Activated naive CD4-positive, alpha-beta T cell treated with anti-CD3 and anti-CD28 coated beads, Interleukin-2, amount 10 ng/mL, durations not matched to agents 7 days and 5 days (primary cell): ENCODE measurements at regions of chr1 and their contacts with region 1.

Region 1: DNA sequence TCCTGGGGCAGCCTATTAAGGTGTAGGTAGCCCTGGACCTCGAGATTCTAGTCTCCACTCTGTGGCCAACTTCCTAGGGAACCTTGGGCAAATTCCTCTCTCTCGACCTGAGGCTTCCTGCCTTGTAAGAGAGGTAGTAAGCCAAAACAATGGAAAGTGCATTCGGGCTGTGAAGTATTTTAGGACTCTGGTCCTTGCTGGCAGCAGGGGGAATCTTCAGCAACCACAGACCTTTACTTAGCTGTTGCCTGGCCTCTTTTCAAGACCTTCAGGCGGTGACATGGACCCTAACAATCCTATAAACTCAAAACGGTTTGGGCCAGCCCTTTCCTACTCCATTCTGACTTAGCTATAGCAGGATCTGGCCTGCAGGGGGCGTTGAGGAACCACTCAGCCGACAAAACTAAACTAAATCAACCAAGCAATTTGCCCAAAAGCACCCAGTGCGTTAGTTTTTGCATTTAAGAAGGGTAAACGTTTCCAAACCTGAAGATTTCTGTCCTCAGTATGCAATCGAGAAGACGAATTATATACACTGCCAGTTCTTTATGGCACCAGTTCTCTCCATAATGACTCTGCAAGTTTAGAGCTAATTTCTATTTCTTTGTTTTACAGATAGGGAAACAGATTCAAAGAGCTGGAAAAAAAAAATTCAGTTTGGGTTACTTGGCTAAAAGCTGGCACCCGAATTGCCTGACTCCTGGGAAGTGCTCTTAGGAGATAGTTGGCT is 10.9 kb upstream of the SESN2 start:
- DNase-seq: peak; percentile 90
- H3K4me3 Mint-ChIP-seq: peak overlapping the region; percentile 91
- H3K27ac Mint-ChIP-seq: peak overlapping the region; percentile 98
- H3K4me1 Mint-ChIP-seq: peaks cover 53% of the 10 kb centered on the region
- H3K27me3 Mint-ChIP-seq: no peaks in the 10 kb centered on the region

Region 2: DNA sequence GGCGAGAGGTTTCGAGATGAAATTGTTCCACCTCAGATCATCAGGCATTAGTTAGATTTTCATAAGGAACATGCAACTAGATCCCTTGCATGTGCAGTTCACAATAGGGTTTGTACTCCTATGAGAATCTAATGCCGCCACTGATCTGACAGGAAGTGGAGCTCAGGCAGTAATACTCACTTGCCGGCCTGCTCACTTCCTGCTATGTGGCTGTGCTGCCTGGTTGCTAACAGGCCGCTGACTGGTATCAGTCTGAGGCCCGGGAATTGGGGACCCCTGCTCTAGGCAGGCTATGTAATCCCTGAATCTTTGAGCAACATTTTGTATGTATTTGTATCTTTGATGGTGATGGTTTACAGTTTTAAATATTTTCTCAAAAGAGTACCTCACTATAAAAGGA is 256.2 kb before region 1 on chr1:
- CTCF ChIA-PET with region 1: no interaction called
- DNase-seq: peak; percentile 68
- H3K4me3 Mint-ChIP-seq: no peak overlapping the region
- H3K27ac Mint-ChIP-seq: peak overlapping the region; percentile 82
- H3K4me1 Mint-ChIP-seq: peaks cover 43% of the 10 kb centered on the region
- H3K27me3 Mint-ChIP-seq: no peaks in the 10 kb centered on the region

Region 3: DNA sequence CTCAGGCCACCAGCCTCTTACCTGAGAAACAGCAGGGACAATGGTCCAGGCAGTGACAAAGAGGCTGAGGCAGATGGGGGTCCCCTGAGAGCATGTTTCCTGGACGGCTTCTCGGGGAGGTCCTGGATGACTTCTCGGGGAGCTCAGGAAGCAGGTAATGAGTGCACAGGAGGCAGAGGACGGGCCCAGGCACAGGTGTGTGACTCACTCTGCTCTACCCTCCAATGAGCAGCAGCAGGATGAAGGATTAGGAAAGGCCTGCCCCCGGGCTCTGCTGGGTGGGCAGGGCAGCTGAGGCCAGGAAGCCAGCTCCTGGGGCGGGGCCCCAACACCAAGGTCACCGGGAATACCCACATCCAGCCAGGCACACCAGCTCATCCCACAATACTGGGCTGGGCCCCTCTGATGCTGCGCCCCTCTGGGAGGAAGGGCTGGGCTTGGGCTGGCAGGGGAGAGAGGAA is 54.7 kb before region 1 on chr1:
- CTCF ChIA-PET with region 1: no interaction called
- DNase-seq: no peak
- H3K4me3 Mint-ChIP-seq: no peak overlapping the region
- H3K27ac Mint-ChIP-seq: no peak overlapping the region
- H3K4me1 Mint-ChIP-seq: peaks cover 23% of the 10 kb centered on the region
- H3K27me3 Mint-ChIP-seq: peaks cover 9% of the 10 kb centered on the region

Region 4: DNA sequence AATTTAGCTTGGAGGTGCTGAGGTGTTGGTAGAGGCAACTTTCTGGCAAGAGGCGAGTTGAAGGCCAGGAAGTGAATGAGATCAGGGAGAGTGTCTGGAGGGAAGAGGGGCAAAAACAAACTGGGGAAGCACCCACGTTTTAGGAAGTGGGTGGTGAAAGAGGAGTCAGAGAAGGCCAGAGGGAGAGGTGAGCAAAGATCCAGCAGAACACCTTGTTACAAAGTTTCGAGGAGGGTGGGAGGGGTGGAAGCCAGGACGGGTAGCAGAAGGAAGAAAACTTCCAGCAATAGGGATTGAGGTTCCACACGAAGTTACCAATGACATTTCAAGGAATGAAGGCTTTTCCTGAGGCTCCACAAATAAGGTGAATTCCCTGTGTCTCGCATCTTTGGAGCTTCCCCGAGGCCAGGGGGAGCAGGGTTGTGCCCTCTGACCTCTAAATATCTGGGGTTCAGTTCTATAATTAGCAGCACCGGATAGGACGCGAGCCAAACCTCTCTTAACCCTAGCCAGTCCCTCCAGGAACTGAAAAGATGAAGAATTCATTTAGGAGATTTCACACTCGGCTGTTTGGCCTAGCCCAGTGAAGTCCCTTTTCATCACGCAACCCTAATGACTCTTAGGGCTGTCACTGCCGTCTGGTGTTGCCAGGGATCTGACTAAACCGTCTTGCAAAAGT is 10.3 kb after region 1 on chr1:
- CTCF ChIA-PET with region 1: interaction called, 20 read pairs
- DNase-seq: no peak
- H3K4me3 Mint-ChIP-seq: peak overlapping the region; percentile 74
- H3K27ac Mint-ChIP-seq: peak overlapping the region; percentile 83
- H3K4me1 Mint-ChIP-seq: peaks cover 56% of the 10 kb centered on the region
- H3K27me3 Mint-ChIP-seq: no peaks in the 10 kb centered on the region

Region 5: GRCh38 chr1:28329395-28330153 is 81.1 kb after region 1 on chr1:
- CTCF ChIA-PET with region 1: interaction called, 11 read pairs
- DNase-seq: no peak
- H3K4me3 Mint-ChIP-seq: peak overlapping the region; percentile 96
- H3K27ac Mint-ChIP-seq: peak overlapping the region; percentile 96
- H3K4me1 Mint-ChIP-seq: peaks cover 36% of the 10 kb centered on the region
- H3K27me3 Mint-ChIP-seq: peaks cover 5% of the 10 kb centered on the region

Region 6: DNA sequence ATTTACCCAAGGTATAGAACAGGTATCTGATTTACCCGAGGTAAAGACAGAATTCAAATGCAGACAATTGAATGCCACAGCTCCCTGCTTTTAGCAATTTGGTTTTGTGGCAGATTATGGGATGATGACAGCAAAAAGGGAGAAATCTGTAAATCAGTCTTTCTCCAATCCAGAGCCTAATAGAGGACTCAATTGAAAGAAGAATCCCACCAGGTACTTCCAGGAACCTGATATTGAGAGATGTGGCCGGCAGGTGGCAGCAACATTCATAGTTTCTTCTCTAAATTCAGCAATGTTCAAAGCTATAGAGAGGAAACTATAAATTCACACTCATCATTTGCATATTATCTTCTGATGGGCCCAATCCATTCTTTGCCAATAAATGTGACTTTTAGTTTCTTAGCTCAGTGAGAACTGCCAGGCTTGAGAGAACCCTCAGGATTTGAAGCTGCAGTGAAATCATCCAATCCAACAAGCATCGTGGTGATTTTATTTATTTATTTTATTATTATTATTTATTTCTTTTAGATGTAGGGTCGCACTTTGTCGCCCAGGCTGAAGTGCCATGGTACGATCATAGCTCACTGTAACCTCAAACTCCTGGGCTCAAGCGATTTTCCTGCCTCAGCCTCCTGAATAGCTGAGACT is 111.3 kb after region 1 on chr1:
- CTCF ChIA-PET with region 1: interaction called, 31 read pairs
- DNase-seq: peak; percentile 86
- H3K4me3 Mint-ChIP-seq: no peak overlapping the region
- H3K27ac Mint-ChIP-seq: no peak overlapping the region
- H3K4me1 Mint-ChIP-seq: peaks cover 3% of the 10 kb centered on the region
- H3K27me3 Mint-ChIP-seq: peaks cover 18% of the 10 kb centered on the region

Region 7: DNA sequence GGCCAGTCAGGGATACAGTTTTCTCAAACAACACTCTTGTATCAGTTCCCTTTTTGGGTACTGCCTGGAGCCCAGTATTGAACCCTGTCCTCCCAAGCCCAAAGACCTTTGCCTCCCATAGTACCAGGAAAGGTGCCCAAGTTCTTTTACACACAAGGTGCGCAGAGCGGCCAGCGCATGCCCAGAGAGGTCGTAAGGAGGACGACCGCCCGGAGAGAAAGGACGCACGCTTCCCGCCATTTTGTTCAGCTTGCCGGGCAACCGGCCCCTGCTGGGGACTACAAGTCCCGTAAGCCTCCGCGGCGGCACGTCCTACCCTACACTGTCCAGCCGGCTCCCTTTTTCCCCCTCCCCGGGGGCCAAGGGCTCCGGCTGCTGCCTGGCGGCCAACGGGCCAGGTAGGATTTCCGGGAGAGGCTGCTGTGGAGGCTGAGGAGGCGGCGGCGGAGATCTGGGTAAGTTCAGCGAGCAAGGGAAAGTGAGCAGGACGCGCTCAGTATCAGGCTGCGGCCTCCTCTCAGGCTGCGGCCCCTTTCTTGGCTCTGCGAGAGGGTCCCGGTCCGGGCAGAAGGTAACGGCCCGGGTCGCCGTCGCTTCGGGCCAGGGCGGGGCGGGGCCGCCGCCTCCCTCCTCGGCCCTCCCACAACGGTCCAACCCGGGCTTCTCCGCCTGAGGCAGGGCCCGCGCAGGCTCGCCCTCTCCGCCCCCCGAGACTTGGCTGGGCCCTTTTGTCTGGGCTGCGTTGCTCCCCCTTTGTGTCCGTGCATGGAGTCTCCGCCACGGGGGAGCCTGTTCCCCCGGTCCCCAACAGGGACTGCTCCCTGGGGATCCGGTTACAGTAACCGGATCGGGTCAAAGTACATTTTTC is 121.2 kb after region 1 on chr1 and contains the start of gene PHACTR4:
- CTCF ChIA-PET with region 1: interaction called, 14 read pairs
- DNase-seq: peak; percentile 88
- H3K4me3 Mint-ChIP-seq: peak within 1 kb of the TSS; percentile 92
- H3K27ac Mint-ChIP-seq: peak within 1 kb of the TSS; percentile 91
- H3K4me1 Mint-ChIP-seq: peaks cover 35% of the 10 kb centered on the region
- H3K27me3 Mint-ChIP-seq: peaks cover 3% of the 10 kb centered on the region

Region 8: GRCh38 chr1:28412731-28413130 is 164.3 kb after region 1 on chr1:
- CTCF ChIA-PET with region 1: interaction called, 15 read pairs
- DNase-seq: no peak
- H3K4me3 Mint-ChIP-seq: no peak overlapping the region
- H3K27ac Mint-ChIP-seq: no peak overlapping the region
- H3K4me1 Mint-ChIP-seq: peaks cover 7% of the 10 kb centered on the region
- H3K27me3 Mint-ChIP-seq: no peaks in the 10 kb centered on the region

Region 9: GRCh38 chr1:28581536-28582247 is 333.2 kb after region 1 on chr1:
- CTCF ChIA-PET with region 1: interaction called, 11 read pairs
- DNase-seq: peak; percentile 95
- H3K4me3 Mint-ChIP-seq: peak overlapping the region; percentile 85
- H3K27ac Mint-ChIP-seq: peak overlapping the region; percentile 89
- H3K4me1 Mint-ChIP-seq: peaks cover 41% of the 10 kb centered on the region
- H3K27me3 Mint-ChIP-seq: no peaks in the 10 kb centered on the region

Region 10: DNA sequence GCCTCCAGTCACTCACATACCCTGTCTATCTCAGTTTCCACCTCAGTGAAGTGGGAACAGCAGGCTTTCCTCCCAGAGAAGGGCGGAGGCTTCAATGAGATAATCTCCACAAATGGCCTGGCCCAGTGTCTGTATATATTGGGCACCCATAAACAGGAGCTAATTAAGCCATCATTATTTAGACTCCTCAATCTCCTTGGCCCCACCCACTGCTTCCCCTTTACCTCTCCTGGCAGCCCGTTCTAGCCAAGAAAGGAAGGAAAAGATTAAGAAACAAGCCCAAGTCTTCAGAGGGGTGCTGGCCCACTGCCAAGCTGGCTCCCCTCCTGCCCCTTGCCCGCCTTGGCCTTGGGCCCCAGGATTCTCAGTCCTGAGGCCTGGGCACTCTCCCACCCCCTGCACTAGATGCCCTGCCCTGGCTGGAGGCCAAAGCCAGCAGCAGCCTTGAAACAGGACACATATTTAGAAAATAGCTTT is 650.0 kb after region 1 on chr1:
- CTCF ChIA-PET with region 1: no interaction called
- DNase-seq: no peak
- H3K4me3 Mint-ChIP-seq: no peak overlapping the region
- H3K27ac Mint-ChIP-seq: no peak overlapping the region
- H3K4me1 Mint-ChIP-seq: peaks cover 28% of the 10 kb centered on the region
- H3K27me3 Mint-ChIP-seq: no peaks in the 10 kb centered on the region